Posterior vena cava (tissue), 2 donors: ENCODE measurements at regions of chr15 and their contacts with region 1.

Region 1: DNA sequence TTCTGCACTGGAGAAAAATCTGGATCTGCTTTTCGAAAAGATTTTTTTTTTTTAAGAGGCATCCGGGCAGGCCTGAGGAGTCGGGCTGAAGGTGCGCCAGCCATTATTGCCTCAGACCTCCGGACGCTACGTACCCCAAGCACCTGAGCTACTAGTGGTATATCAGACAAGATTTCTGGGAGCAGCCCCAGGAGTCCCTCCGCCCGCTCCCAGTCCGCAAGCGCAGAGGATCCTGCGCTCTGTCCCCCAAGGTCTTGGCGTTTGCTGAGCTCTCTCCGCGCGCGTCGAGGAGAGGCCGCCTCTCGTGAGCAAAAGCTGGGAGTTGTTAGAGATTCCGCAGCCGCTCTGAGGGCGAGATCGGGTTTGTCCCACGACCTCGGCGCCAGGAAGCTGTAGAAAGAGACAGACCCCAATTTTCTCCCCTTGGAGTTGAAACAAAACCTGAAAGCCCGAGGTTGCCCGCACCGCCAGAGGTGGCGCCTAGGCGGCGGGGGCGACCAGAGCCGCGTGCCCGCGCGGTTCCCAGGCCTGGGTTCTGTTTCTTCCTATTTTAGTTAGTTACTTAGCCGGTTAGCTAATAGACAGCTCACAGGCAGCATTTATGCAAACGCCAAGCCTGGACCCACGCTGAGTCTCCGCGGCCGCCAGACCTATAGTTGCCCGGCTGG is 72.5 kb upstream of the POLG start:
- DNase-seq: no peak

Region 2: GRCh38 chr15:88003541-88004332 is 1403.3 kb before region 1 on chr15:
- intact Hi-C with region 1: loop called in 1 of 2 experiments (anchors 5 kb)
- DNase-seq: no peak

Region 3: DNA sequence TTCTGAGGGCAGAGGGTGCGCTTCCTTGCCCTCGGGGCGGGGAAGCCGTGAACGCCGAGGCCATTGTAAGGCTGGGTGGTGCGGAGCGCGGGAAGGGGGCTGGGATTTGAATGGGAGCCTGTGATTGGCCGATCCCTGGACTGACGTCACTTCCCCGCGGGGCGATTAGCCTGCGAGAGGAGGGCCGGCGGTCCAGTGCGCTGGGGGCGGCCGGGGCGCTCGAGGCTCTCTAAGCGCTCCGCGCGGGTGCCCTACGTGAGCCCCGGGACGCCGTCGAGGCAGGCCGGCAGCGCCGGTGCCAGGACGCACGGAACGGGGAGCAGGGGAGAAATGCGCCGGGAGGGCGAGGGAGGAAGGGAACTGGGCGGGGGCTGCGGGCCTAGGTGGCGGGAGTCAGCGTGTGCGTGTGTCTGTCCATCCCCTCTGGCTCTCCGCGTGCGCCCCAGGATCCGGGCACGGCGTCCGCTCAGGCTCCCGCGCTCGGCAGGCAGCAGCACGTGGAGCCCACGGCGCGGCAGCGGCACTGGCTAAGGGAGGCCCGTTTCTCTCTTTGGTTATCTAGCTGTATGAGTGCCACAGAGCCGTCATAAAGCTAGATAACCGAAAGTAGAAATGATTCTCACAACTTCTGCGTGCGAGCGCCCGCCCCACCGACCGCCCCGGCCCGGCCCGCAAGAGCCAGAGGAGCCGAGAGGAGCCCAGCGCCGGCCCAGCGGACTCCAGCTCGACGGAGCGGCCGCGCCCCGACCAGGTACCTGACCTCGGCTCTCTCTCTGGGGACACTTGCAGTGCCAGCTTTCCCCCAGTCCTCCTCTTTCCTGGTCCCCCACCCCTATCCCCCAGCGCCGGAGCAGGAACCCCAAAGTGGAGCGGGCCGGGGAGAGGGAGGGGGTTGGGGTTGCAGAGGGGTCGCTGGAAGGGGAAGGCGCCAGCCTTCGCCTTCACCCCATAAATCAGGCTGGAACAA is 39.3 kb before region 1 on chr15:
- intact Hi-C with region 1: loop called in 1 of 2 experiments (anchors 5 kb)
- DNase-seq: no peak